Activated CD4-positive, alpha-beta memory T cell treated with anti-CD3 and anti-CD28 coated beads for 36 hours (primary cell): ENCODE measurements at regions of chr1 and their contacts with region 1.

Region 1: DNA sequence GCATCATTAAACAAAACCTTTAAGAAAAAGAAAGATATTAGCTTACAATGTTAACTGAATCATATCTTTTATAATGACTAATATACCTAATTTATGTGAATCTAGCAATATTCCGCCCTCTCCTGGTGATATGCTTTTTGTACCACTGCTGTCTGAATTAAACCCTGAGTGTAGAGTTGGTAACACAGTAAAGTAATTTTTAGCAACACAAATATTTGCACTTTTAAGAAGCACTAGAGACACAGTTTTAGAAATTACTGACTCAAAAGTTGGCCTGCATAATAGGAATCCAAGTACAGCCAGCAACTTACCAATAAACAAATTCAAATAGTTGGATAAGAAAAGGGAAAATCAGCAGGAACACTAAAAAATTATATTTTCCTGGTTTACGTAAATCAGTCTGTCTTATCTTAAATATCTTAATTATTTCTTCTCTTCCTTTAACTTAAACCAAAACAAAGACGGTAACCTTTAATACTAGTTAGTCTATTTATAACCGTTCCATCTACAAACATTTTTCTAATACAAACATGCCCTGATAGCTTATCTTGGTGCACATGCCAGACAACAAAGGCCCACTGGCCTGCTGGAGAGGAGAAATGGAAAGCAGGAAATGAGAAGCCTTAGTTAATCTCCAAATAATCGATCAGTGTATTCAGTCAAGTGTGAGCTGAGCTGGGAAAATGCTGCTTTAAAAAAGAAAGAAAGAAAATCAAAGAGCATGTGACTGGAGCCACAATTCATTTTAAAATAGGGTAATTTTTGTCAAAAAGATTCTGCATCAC is 246.0 kb downstream of the RERE start:
- DNase-seq: no peak
- H3K4me3 Mint-ChIP-seq: no peak overlapping the region
- H3K27ac Mint-ChIP-seq: no peak overlapping the region
- H3K4me1 Mint-ChIP-seq: no peaks in the 10 kb centered on the region
- H3K27me3 Mint-ChIP-seq: no peaks in the 10 kb centered on the region

Region 2: GRCh38 chr1:8525558-8526275 is 45.7 kb before region 1 on chr1:
- CTCF ChIA-PET with region 1: no interaction called
- POLR2A ChIA-PET with region 1: no interaction called
- intact Hi-C with region 1: no loop called
- DNase-seq: peak; percentile 85
- H3K4me3 Mint-ChIP-seq: no peak overlapping the region
- H3K27ac Mint-ChIP-seq: no peak overlapping the region
- H3K4me1 Mint-ChIP-seq: peaks cover 18% of the 10 kb centered on the region
- H3K27me3 Mint-ChIP-seq: no peaks in the 10 kb centered on the region

Region 3: GRCh38 chr1:8560611-8561544 is 10.5 kb before region 1 on chr1:
- CTCF ChIA-PET with region 1: interaction called, 29 read pairs
- POLR2A ChIA-PET with region 1: no interaction called
- intact Hi-C with region 1: no loop called
- DNase-seq: no peak
- H3K4me3 Mint-ChIP-seq: no peak overlapping the region
- H3K27ac Mint-ChIP-seq: peak overlapping the region; percentile 50
- H3K4me1 Mint-ChIP-seq: peaks cover 41% of the 10 kb centered on the region
- H3K27me3 Mint-ChIP-seq: no peaks in the 10 kb centered on the region

Region 4: GRCh38 chr1:8727809-8728213 is 156.4 kb after region 1 on chr1:
- CTCF ChIA-PET with region 1: interaction called, 13 read pairs
- POLR2A ChIA-PET with region 1: no interaction called
- intact Hi-C with region 1: no loop called
- DNase-seq: no peak
- H3K4me3 Mint-ChIP-seq: no peak overlapping the region
- H3K27ac Mint-ChIP-seq: no peak overlapping the region
- H3K4me1 Mint-ChIP-seq: peaks cover 14% of the 10 kb centered on the region
- H3K27me3 Mint-ChIP-seq: no peaks in the 10 kb centered on the region

Region 5: GRCh38 chr1:9201401-9202239 is 630.2 kb after region 1 on chr1:
- CTCF ChIA-PET with region 1: no interaction called
- POLR2A ChIA-PET with region 1: no interaction called
- intact Hi-C with region 1: no loop called
- DNase-seq: no peak
- H3K4me3 Mint-ChIP-seq: no peak overlapping the region
- H3K27ac Mint-ChIP-seq: no peak overlapping the region
- H3K4me1 Mint-ChIP-seq: peaks cover 34% of the 10 kb centered on the region
- H3K27me3 Mint-ChIP-seq: peaks cover 83% of the 10 kb centered on the region